Activated CD4-positive, alpha-beta T cell treated with anti-CD3 and anti-CD28 coated beads for 36 hours (primary cell): ENCODE measurements at regions of chr5 and their contacts with region 1.

Region 1: DNA sequence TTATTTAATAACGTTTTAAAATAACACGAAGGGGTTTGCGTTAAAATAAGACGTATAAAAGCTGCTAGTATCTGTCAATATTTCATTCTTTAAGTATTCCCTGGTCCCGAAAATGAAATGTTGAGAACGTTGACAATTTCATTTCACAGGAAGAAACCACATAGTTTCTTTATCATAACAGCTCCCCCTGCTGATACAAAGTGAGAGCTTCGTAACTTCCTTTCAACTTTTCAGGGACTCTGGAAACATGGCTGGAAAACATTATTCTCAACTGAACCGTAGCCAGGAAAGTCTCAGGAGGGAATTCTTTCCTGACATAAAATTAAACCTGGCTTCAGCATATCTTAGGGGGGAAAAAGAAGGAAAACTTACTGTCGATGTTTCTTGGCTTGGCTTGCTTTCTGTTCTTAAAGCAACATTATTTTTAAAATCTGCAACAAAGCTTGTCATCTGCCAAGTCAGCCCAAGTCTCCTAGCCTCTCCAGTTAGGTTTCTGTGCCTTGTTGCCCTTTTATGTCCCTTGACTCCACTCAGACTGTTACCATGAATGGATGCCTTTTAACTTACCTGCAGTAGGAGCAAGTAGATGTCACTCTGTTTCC is 122.9 kb upstream of the DAB2 start:
- DNase-seq: peak; percentile 7
- ATAC-seq: no peak
- H3K4me3 Mint-ChIP-seq: no peak overlapping the region
- H3K27ac Mint-ChIP-seq: no peak overlapping the region
- H3K4me1 Mint-ChIP-seq: peaks cover 4% of the 10 kb centered on the region
- H3K27me3 Mint-ChIP-seq: peaks cover 9% of the 10 kb centered on the region

Region 2: GRCh38 chr5:38831909-38832308 is 715.7 kb before region 1 on chr5:
- CTCF ChIA-PET with region 1: no interaction called
- POLR2A ChIA-PET with region 1: no interaction called
- intact Hi-C with region 1: loop called in 1 of 2 experiments (anchors 10 kb)
- DNase-seq: peak; percentile 29
- ATAC-seq: no peak
- H3K4me3 Mint-ChIP-seq: no peak overlapping the region
- H3K27ac Mint-ChIP-seq: no peak overlapping the region
- H3K4me1 Mint-ChIP-seq: no peaks in the 10 kb centered on the region
- H3K27me3 Mint-ChIP-seq: peaks cover 17% of the 10 kb centered on the region

Region 3: GRCh38 chr5:38979535-38979934 is 568.1 kb before region 1 on chr5:
- CTCF ChIA-PET with region 1: no interaction called
- POLR2A ChIA-PET with region 1: no interaction called
- intact Hi-C with region 1: no loop called
- DNase-seq: no peak
- ATAC-seq: no peak
- H3K4me3 Mint-ChIP-seq: no peak overlapping the region
- H3K27ac Mint-ChIP-seq: no peak overlapping the region
- H3K4me1 Mint-ChIP-seq: peaks cover 3% of the 10 kb centered on the region
- H3K27me3 Mint-ChIP-seq: no peaks in the 10 kb centered on the region

Region 4: GRCh38 chr5:39148983-39149534 is 398.6 kb before region 1 on chr5:
- CTCF ChIA-PET with region 1: no interaction called
- POLR2A ChIA-PET with region 1: no interaction called
- intact Hi-C with region 1: loop called in 1 of 2 experiments (anchors 5 kb)
- DNase-seq: no peak
- ATAC-seq: no peak
- H3K4me3 Mint-ChIP-seq: no peak overlapping the region
- H3K27ac Mint-ChIP-seq: peak overlapping the region; percentile 85
- H3K4me1 Mint-ChIP-seq: peaks cover 75% of the 10 kb centered on the region
- H3K27me3 Mint-ChIP-seq: no peaks in the 10 kb centered on the region

Region 5: GRCh38 chr5:39370555-39371366 is 176.9 kb before region 1 on chr5:
- CTCF ChIA-PET with region 1: interaction called, 48 read pairs
- POLR2A ChIA-PET with region 1: no interaction called
- intact Hi-C with region 1: no loop called
- DNase-seq: no peak
- ATAC-seq: no peak
- H3K4me3 Mint-ChIP-seq: no peak overlapping the region
- H3K27ac Mint-ChIP-seq: no peak overlapping the region
- H3K4me1 Mint-ChIP-seq: no peaks in the 10 kb centered on the region
- H3K27me3 Mint-ChIP-seq: no peaks in the 10 kb centered on the region

Region 6: GRCh38 chr5:39525271-39525670 is 22.4 kb before region 1 on chr5:
- CTCF ChIA-PET with region 1: interaction called, 10 read pairs
- POLR2A ChIA-PET with region 1: no interaction called
- intact Hi-C with region 1: no loop called
- DNase-seq: no peak
- ATAC-seq: no peak
- H3K4me3 Mint-ChIP-seq: no peak overlapping the region
- H3K27ac Mint-ChIP-seq: no peak overlapping the region
- H3K4me1 Mint-ChIP-seq: no peaks in the 10 kb centered on the region
- H3K27me3 Mint-ChIP-seq: peaks cover 19% of the 10 kb centered on the region

Region 7: DNA sequence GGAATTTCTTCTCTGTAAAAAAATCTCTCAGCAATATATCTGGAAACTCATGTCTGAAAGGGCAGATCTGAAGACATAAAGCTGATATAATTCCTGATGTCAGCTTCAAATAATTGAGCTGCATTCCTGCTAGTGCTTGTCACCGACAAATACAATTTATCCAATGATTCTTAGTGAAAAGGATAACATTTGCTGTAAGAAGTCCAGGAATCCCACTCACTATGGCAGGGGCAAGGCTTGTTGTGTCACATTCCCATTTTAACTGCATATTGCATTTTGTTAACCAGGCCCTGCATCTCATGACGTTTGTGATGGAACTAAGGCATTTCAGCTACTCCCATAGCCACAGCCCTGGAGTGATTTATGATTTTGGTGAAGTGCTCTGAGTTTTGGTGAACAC is 37.3 kb after region 1 on chr5:
- CTCF ChIA-PET with region 1: no interaction called
- POLR2A ChIA-PET with region 1: no interaction called
- intact Hi-C with region 1: no loop called
- DNase-seq: no peak
- ATAC-seq: no peak
- H3K4me3 Mint-ChIP-seq: no peak overlapping the region
- H3K27ac Mint-ChIP-seq: no peak overlapping the region
- H3K4me1 Mint-ChIP-seq: peaks cover 8% of the 10 kb centered on the region
- H3K27me3 Mint-ChIP-seq: peaks cover 8% of the 10 kb centered on the region